Activated naive CD4-positive, alpha-beta T cell treated with anti-CD3 and anti-CD28 coated beads for 36 hours (primary cell): ENCODE measurements at regions of chr17 and their contacts with region 1.

Region 1: DNA sequence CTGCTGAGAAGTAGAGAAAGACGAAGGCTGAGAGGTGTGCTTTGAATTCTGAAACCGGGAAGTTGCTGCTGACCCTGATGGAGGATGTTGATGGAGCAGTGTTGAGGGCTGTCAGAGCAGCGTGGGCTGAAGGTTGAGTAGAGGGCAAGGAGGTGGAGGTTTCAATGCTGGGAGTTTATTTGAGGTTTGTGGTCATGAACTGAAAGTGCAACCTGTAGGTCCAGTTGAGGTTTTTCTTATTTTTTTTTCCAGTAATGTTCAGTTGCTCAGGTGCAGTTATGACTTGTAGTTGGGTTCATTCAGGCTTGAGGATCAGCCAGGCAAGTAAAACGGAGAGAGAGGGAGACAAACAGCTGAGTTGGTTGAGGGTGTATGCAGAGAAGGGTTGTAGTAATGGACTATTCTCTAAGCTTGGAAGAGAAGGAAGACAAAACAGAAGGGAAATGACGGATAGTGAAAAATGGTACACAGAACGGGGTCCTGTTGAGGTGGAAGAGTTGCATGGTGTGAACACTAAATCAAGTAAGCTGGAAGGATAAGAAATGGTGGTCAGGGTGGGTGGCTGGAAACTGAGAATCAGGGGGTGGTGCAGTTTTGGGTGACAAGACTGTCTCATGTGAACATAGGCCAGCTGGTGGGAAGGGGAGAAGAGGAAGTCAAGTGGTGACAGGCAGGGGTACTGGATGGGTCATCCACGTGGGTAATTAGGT is 8.7 kb upstream of the UBE2G1 start:
- DNase-seq: peak; percentile 73
- H3K4me3 Mint-ChIP-seq: peak overlapping the region; percentile 14
- H3K27ac Mint-ChIP-seq: peak overlapping the region; percentile 73
- H3K4me1 Mint-ChIP-seq: peaks cover 10% of the 10 kb centered on the region
- H3K27me3 Mint-ChIP-seq: no peaks in the 10 kb centered on the region

Region 2: DNA sequence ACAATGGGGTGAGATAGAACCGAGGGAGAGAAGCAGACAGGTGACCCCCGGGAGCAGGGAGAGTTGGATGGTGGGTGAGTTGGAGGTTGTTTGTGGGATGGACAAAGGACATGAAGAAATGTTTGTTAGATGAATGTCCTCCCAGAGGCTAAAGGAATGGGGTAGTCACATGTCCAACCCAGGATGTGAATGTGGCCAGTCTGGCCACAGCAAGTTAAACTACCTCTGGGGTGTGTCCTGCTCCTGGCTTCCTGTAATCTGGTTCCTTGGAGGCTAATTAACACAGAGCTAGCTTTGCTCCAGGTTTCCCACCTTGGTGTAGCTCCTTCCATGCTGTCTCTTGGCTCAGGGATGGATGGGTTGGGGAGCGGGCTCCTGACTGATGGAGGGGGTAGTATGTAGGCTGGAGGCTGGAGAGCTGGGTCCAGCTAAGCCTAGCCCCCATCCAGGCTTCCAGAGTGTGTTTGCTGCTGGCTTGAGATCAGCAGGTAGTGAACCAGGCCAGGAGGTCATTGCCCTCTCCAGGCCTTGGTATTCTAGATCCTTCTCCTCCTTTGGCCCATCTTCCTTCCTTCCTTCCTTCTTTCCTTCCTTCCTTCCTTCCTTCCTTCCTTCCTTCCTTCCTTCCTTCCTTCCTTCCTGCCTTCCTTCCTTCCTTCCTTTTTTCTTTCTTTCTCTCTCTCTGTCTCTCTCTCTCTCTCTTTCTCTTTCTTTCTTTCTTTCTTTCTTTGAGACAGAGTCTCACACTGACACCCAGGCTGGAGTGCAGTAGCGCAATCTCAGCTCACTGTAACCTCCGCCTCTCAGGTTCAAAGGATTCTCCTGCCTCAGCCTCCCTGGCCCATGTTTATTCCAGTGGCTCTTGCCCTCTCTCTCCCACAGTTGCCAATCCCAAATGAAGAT is 19.3 kb after region 1 on chr17:
- CTCF ChIA-PET with region 1: no interaction called
- intact Hi-C with region 1: loop called (anchors 1 kb)
- DNase-seq: no peak
- H3K4me3 Mint-ChIP-seq: no peak overlapping the region
- H3K27ac Mint-ChIP-seq: no peak overlapping the region
- H3K4me1 Mint-ChIP-seq: peaks cover 8% of the 10 kb centered on the region
- H3K27me3 Mint-ChIP-seq: no peaks in the 10 kb centered on the region

Region 3: DNA sequence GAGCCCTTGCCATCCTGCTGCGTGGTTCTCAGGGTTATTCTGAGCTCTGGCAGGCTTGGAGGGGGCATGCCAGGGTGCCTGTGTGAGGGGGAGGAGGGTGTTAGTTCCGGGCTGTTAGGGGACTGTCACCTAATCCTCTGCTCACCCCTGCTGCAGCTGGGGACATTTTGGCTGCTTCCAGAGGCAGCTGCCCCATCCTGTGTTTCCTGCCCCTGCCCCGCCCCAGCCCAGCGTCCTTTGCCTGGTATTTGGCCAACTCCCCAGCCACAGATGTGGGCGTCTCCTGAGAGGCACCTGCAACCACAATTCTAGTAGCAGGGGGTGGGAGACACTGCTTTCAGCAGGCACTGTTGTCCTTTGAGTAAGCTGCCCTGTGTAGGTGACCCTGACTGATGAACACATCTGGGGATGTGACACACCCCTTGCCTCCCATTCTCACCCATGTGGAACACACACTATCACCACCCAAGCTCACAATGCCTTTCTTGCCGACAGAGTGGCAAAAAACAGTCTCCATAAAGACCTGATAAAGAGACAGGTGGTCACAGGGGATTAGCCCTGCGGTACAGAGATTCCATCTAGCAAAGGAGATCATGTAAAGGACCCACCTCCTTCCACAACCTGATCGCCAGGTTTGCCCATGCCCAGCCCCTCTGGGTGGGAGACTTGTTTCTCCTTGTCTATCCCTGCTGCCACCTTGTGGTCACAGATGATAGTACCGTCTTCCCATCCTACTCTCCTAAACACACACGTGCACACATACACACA is 528.0 kb after region 1 on chr17 and contains the start of gene CHRNE:
- CTCF ChIA-PET with region 1: no interaction called
- intact Hi-C with region 1: no loop called
- DNase-seq: peak; percentile 91
- H3K4me3 Mint-ChIP-seq: peak within 1 kb of the TSS; percentile 1
- H3K27ac Mint-ChIP-seq: peak within 1 kb of the TSS; percentile 48
- H3K4me1 Mint-ChIP-seq: peaks cover 32% of the 10 kb centered on the region
- H3K27me3 Mint-ChIP-seq: no peaks in the 10 kb centered on the region
- total RNA-seq, gene CHRNE: 0.22 to 0.38 TPM